ENCODE measurements at regions of chr2 and their contacts with region 1.

Region 1: GRCh38 chr2:54503192-54503591 is 47.1 kb downstream of the SPTBN1 start:
- DNase-seq: no peak

Region 2: DNA sequence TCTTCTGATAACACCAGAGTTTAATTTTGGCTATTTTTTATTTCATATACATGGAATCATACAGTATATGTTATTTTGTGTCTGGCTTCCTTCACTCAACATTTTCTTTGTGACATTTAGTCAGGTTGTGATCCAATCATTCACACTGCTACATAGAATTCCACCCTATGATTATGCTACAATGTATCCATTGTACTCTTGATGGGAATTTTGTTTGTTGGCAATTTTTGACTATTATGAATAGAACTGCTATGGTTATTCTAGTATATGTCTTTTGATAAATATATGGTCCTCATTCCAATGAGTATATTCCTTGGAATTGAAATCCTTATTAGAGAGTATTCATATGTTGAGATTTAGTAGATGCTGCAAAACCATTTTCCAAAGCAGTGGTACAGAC is 1672.0 kb before region 1 on chr2:
- intact Hi-C with region 1: no loop called
- DNase-seq: no peak

Region 3: GRCh38 chr2:54476852-54477251 is 26.3 kb before region 1 on chr2:
- intact Hi-C with region 1: loop called in 1 of 2 experiments (anchors 1 kb)
- DNase-seq: no peak

Measured in posterior vena cava (tissue), 2 donors.